ENCODE measurements at regions of chr19 and their contacts with region 1.

Region 1: DNA sequence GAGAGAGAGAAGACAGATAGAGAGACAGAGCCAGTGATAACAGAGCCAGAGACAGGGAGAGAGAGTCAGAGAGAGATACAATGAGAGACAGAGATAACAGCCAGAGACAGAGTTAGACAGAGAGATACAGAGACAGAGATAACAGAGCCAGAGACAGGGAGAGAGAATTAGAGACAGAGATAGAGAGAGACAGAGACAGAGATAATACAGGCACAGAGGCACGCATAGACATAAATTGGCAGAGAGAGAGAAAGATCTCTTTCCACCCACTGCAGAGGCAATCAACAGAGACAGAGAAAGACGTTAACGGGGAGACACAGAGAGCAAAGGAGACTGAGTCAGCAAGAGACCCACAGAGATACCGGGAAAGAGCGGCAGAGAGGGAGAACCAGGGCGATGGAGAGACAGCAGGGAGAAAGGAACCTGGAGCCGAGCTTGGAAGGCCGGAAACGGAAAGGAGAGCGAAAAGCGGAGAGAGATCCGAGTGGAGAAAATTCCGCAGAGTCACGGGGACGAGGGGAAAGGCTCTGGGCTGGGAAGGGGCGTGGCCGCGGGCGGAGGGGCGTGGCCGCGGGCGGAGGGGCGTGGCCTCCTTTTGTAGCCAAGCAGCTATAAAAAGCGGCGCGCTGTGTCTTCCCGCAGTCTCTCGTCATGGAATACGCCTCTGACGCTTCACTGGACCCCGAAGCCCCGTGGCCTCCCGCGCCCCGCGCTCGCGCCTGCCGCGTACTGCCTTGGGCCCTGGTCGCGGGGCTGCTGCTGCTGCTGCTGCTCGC is at the start of gene TNFSF9:
- DNase-seq: peak; percentile 86
- ATAC-seq: peak; percentile 29
- H3K4me3 Mint-ChIP-seq: peak within 1 kb of the TSS; percentile 78
- H3K27ac Mint-ChIP-seq: peak within 1 kb of the TSS; percentile 72
- H3K4me1 Mint-ChIP-seq: peaks cover 64% of the 10 kb centered on the region
- H3K27me3 Mint-ChIP-seq: peaks cover 9% of the 10 kb centered on the region
- CTCF ChIP-seq: no peak
- total RNA-seq, gene TNFSF9: 6.0 and 7.1 TPM in 2 replicates

Region 2: DNA sequence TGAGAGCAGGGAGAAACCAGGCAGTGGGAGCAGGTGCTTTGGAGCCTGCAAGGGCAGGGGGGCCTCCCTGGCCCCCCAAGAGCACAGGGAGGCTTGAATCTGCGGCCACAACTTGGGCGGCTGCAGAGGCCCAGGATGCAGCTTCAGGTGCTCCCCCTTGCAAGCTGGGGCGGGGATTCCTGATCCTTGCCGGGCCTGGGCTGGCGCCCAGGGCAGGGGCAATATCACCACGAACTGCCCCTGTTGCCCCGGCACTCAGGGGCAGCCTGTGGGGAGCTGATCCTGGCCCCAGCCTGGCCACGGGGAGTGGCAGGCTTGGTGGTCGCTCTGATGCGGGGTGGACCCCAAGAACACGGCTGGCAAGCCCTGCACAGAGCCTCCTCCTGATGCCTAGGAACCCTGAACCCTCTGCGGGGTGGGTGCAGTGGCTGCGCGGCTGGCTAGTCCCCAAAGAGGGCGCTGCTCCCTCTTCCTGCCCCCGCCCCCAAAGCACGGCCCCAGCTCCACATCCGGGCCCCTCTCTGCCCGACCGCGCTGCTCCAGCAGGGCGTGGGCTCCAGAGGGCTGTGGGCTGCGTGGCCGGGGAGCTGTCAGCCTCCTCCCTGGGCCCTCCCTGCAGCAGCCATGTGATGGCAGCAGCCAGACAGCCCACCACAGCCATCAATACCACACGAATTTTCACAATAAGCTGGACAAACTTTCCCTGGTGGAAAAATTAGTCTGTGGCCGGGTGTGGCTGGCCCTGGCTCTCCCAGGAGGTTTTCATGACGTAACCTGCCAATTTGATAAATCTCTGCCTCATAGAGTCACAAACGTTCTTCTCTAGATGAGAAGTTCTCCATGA is 21.3 kb after region 1 on chr19:
- CTCF ChIA-PET with region 1: interaction called, 4 read pairs
- POLR2A ChIA-PET with region 1: interaction called, 9 read pairs
- intact Hi-C with region 1: loop called (anchors 1 kb)
- DNase-seq: peak; percentile 35
- ATAC-seq: peak; percentile 88
- H3K4me3 Mint-ChIP-seq: peak overlapping the region; percentile 19
- H3K27ac Mint-ChIP-seq: no peak overlapping the region
- H3K4me1 Mint-ChIP-seq: peaks cover 9% of the 10 kb centered on the region
- H3K27me3 Mint-ChIP-seq: no peaks in the 10 kb centered on the region
- CTCF ChIP-seq: no peak

Region 3: GRCh38 chr19:6654347-6655310 is 124.1 kb after region 1 on chr19:
- CTCF ChIA-PET with region 1: no interaction called
- POLR2A ChIA-PET with region 1: no interaction called
- intact Hi-C with region 1: no loop called
- DNase-seq: no peak
- ATAC-seq: no peak
- H3K4me3 Mint-ChIP-seq: no peak overlapping the region
- H3K27ac Mint-ChIP-seq: no peak overlapping the region
- H3K4me1 Mint-ChIP-seq: peaks cover 9% of the 10 kb centered on the region
- H3K27me3 Mint-ChIP-seq: peaks cover 16% of the 10 kb centered on the region
- CTCF ChIP-seq: no peak

Measured in activated B cell treated with CpG ODN at 0.5 μM for 24 hours (primary cell).